Sciatic nerve (tissue), 2 donors: ENCODE measurements at regions of chr5 and their contacts with region 1.

Region 1: DNA sequence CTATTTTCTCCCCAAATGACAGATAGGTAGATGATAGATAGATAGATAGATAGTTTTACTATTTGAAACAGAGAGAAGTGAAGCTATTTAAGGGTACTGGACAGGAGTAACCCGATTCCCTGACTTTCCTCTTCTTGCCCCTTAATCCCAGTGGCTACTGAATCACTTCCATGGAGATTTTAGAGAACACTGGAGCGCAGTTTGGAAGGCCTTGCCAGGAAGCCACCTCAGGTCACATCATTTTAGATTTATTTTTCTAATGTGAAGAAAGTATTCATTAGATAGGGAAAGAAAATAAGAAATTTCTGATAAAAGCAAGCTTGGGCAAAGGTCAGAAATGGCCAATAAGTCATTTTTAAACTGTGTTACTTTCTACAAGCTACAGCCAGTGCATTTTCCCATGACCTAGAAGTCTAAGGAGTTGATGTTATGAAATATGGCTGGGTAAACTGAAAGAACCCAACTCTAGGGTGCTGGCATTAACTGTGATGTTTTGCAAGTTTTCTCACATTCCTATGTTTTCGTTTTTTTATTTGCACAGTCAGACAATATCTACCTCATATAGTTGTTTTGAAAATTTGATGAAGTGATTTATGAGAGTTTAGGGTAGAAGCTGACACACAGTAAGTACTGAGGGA is 544.7 kb upstream of the PTGER4 start:
- DNase-seq: no peak
- ATAC-seq: peak; percentile 65

Region 2: GRCh38 chr5:40477856-40478546 is 343.0 kb after region 1 on chr5:
- intact Hi-C with region 1: loop called (anchors 10 kb)
- DNase-seq: no peak
- ATAC-seq: no peak